GM12878 (cell line): ENCODE measurements at regions of chr18 and their contacts with region 1.

Region 1: DNA sequence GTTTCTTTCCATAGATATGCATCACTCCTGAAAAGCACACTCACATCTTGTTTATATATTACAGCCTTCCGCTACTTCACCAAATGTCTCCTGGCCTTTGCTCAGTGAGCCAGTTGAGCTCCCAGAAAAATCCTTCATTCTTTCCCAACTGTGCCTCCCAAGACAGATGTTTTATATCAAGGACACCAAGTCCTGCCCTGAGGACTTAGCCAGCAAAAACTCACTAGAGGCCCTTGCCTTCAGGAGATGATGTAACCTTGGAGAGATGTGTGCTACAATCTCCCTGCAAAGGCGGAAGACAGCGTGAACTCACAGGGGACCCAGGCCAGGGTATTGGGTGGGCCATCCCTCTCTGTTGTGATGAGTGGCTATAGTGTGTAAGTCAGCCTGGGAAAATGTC is 86.1 kb upstream of the CTAGE1 start:
- DNase-seq: no peak
- ATAC-seq: no peak
- H3K4me3 ChIP-seq: no peak overlapping the region
- H3K27ac ChIP-seq: no peak overlapping the region
- H3K4me1 ChIP-seq: no peaks in the 10 kb centered on the region
- H3K27me3 ChIP-seq: no peaks in the 10 kb centered on the region
- CTCF ChIP-seq: no peak
- EP300 ChIP-seq: no peak
- POLR2A ChIP-seq: no peak
- RAD21 ChIP-seq: no peak

Region 2: GRCh38 chr18:22521026-22521707 is 17.4 kb after region 1 on chr18:
- CTCF ChIA-PET with region 1: no interaction called
- POLR2A ChIA-PET with region 1: no interaction called
- RAD21 ChIA-PET with region 1: no interaction called
- SMC1A ChIA-PET with region 1: no interaction called
- in situ Hi-C with region 1: no loop called
- intact Hi-C with region 1: no loop called
- DNase-seq: no peak
- ATAC-seq: no peak
- H3K4me3 ChIP-seq: no peak overlapping the region
- H3K27ac ChIP-seq: no peak overlapping the region
- H3K4me1 ChIP-seq: no peaks in the 10 kb centered on the region
- H3K27me3 ChIP-seq: no peaks in the 10 kb centered on the region
- CTCF ChIP-seq: no peak
- EP300 ChIP-seq: no peak
- POLR2A ChIP-seq: no peak
- RAD21 ChIP-seq: no peak

Region 3: DNA sequence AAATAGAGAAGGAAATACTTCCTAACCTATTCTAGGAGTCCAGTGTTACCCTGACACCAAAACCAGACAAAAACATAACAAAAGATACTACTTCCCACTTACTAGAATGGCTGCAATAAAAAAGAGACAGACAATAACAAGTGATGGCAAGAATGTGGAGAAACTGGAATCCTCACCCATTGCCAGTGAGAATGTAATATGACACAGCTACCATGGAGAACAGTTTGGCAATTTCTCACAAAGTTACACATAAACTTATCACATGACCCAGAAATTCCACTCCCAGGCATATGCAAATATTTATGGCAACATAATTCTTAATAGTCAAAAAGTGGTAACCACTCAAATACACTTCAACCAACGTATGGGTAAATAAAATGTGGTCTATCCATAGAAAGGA is 123.7 kb after region 1 on chr18:
- CTCF ChIA-PET with region 1: no interaction called
- POLR2A ChIA-PET with region 1: no interaction called
- RAD21 ChIA-PET with region 1: no interaction called
- SMC1A ChIA-PET with region 1: no interaction called
- in situ Hi-C with region 1: no loop called
- intact Hi-C with region 1: loop called (anchors 10 kb)
- DNase-seq: no peak
- ATAC-seq: no peak
- H3K4me3 ChIP-seq: no peak overlapping the region
- H3K27ac ChIP-seq: no peak overlapping the region
- H3K4me1 ChIP-seq: no peaks in the 10 kb centered on the region
- H3K27me3 ChIP-seq: no peaks in the 10 kb centered on the region
- CTCF ChIP-seq: no peak
- EP300 ChIP-seq: no peak
- POLR2A ChIP-seq: no peak
- RAD21 ChIP-seq: no peak